SK-N-SH (cell line): ENCODE measurements at regions of chr12 and their contacts with region 1.

Region 1: DNA sequence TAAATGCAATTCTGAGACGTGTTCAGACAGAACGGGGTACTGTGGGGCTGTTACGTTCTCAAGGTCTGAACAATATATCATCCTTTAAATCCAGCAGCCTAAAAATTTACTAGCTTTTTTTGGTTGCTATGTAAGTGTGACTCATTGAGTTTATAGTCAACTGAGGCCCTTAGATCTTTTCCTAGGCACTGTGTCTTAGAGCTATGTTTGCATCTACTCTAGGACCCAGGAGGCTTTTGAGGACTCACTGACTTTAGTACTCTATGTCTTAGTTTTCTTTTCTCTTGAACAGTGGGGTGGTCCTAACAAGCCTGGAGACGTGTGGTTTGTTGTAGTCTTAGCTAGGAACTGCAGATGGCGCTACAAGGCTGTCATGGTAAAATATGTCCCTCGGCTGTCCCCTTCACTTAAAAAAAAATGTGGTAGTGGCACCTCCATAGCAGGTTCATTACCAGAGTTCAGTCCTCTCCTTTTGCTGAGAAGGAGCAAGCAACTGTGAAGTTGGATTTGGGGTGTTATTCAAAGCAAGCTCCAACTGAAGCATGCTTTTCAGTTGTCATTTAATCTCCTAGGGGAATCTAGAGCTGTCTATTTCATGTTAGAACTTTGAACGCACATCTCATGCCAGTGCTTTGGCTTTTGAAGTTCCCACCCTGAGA is 8.7 kb upstream of the SPATS2 start:
- DNase-seq: peak; percentile 74
- H3K4me3 ChIP-seq: peak overlapping the region in 1 of 2 experiments; percentile 43; a peak in 1 of 4 replicates
- H3K27ac ChIP-seq: peak overlapping the region in 1 of 2 experiments; percentile 44; a peak in 2 of 4 replicates
- H3K4me1 ChIP-seq: no peaks in the 10 kb centered on the region
- H3K27me3 ChIP-seq: no peaks in the 10 kb centered on the region
- CTCF ChIP-seq: peak; percentile 92
- EP300 ChIP-seq: no peak
- RAD21 ChIP-seq: peak; percentile 97

Region 2: DNA sequence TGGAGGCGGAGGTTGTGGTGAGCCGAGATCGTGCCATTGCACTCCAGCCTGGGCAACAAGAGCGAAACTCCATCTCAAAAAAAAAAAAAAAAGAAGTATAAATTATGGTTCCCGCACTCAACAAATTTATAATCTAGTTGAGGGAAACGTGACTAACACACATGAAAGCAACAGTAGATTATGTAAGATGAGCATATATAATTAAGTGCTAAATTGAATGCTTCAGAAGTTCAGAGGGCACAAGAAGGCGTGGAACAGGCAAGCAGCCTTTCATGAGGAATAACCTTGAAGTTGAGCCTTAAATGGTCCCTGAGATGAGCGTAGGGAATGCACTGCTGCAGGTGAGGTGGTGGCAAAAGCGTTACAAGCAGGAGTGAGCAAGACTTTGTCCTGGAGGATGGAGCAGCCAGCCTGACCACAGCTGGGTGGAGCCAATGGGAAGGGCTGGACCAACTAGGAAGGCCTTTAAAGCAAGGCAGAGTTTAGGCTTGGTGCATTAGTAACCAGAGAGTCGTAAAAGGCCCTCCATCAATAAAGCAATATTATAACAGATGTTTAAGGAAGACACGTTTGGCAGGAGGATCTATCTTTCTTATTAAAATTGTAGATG is 139.1 kb before region 1 on chr12:
- CTCF ChIA-PET with region 1: no interaction called
- POLR2A ChIA-PET with region 1: no interaction called
- DNase-seq: no peak
- H3K4me3 ChIP-seq: no peak overlapping the region
- H3K27ac ChIP-seq: no peak overlapping the region
- H3K4me1 ChIP-seq: peaks cover 13 to 16% of the 10 kb centered on the region in 2 experiments; a peak in 3 of 4 replicates
- H3K27me3 ChIP-seq: no peaks in the 10 kb centered on the region
- CTCF ChIP-seq: no peak
- EP300 ChIP-seq: no peak
- RAD21 ChIP-seq: no peak

Region 3: GRCh38 chr12:49331380-49332222 is 27.0 kb before region 1 on chr12:
- CTCF ChIA-PET with region 1: interaction called, 40 read pairs
- POLR2A ChIA-PET with region 1: interaction called, 3 read pairs
- DNase-seq: peak; percentile 81
- H3K4me3 ChIP-seq: peak overlapping the region in 1 of 2 experiments; percentile 25; a peak in 1 of 4 replicates
- H3K27ac ChIP-seq: no peak overlapping the region
- H3K4me1 ChIP-seq: peaks cover 0 to 2% of the 10 kb centered on the region in 2 experiments; a peak in 1 of 4 replicates
- H3K27me3 ChIP-seq: no peaks in the 10 kb centered on the region
- CTCF ChIP-seq: peak; percentile 84
- EP300 ChIP-seq: no peak
- RAD21 ChIP-seq: peak; percentile 80

Region 4: DNA sequence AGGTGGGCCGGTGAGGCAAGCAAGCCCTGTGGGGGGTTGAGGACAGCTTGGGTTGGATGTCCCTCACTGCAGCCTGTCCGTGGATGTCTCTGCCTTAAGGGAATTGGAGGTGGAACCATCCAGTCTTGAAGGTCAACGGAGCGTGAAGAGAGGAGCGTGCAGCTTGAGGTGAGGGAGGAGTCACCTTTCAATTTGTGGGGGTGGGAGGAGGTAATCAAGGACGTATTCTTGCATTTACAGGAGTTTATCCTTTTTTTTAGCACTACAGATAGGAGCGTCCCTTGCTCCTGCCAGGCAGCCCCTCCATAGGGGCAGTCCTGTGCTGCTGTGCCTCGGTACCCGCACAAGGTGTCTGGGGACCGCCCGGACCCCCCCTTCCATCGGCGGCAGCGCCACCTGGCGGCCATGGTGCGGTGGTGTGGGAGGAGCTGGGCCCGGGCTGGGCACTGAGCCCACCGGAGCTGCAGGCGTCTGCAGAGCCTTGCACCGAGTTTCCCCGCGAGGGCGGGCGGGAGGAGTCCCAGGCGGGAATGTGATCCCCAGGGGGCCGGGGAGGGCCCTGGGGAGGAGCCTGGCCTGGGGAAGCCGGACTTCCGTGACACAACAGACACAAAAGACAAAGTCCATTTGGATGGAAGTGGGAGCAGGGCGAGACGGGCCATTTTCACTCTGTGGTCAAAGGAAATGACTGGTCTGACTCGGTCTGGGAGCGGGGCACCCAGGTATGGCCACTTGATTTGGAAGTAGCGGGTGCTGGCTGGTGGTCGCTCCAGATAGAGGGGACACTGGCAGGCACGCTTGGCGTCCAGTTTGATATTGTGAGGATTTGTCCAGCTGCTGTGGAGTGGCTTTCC is 11.0 kb before region 1 on chr12:
- CTCF ChIA-PET with region 1: interaction called, 133 read pairs
- POLR2A ChIA-PET with region 1: no interaction called
- DNase-seq: peak; percentile 97
- H3K4me3 ChIP-seq: peak overlapping the region; percentile 19 to 50
- H3K27ac ChIP-seq: no peak overlapping the region
- H3K4me1 ChIP-seq: peaks cover 15 to 38% of the 10 kb centered on the region in 2 experiments; a peak in 2 of 4 replicates
- H3K27me3 ChIP-seq: peaks cover 5% of the 10 kb centered on the region; the same call in 1 of the 2 replicates
- CTCF ChIP-seq: peak; percentile 95
- EP300 ChIP-seq: no peak
- RAD21 ChIP-seq: peak; percentile 34

Region 5: DNA sequence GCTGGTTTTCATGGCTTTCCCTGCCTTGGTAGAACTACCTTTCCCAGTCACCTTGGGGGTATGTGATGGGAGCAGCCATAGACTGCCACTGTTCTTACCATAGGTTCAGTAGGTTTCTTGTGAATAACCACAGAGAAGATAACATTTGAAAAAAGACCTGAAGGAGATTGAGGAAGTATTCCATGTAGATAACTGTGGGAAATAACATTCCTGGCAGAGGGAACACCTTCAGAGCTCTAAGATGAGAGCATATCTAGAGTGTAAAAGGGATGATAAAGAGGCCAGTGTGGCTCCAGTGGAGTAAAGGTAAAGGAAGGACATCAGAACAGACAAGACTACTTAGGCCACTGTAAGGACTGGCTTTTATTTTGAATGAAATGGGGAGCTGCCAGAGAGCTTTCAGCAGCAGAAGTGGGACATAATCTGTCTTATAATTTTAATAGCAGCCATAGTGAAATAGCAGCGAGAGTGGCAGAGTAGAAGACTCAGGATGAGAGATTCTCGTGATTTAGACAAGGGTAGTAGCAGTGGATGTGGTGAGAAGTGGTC is 97.6 kb after region 1 on chr12:
- CTCF ChIA-PET with region 1: interaction called, 10 read pairs
- POLR2A ChIA-PET with region 1: no interaction called
- DNase-seq: no peak
- H3K4me3 ChIP-seq: no peak overlapping the region
- H3K27ac ChIP-seq: no peak overlapping the region
- H3K4me1 ChIP-seq: no peaks in the 10 kb centered on the region
- H3K27me3 ChIP-seq: no peaks in the 10 kb centered on the region
- CTCF ChIP-seq: no peak
- EP300 ChIP-seq: no peak
- RAD21 ChIP-seq: no peak

Region 6: GRCh38 chr12:49496417-49497360 is 138.1 kb after region 1 on chr12:
- CTCF ChIA-PET with region 1: interaction called, 44 read pairs
- POLR2A ChIA-PET with region 1: no interaction called
- DNase-seq: no peak
- H3K4me3 ChIP-seq: no peak overlapping the region
- H3K27ac ChIP-seq: no peak overlapping the region
- H3K4me1 ChIP-seq: peaks cover 0 to 12% of the 10 kb centered on the region in 2 experiments; a peak in 2 of 4 replicates
- H3K27me3 ChIP-seq: no peaks in the 10 kb centered on the region
- CTCF ChIP-seq: no peak
- EP300 ChIP-seq: no peak
- RAD21 ChIP-seq: no peak

Region 7: DNA sequence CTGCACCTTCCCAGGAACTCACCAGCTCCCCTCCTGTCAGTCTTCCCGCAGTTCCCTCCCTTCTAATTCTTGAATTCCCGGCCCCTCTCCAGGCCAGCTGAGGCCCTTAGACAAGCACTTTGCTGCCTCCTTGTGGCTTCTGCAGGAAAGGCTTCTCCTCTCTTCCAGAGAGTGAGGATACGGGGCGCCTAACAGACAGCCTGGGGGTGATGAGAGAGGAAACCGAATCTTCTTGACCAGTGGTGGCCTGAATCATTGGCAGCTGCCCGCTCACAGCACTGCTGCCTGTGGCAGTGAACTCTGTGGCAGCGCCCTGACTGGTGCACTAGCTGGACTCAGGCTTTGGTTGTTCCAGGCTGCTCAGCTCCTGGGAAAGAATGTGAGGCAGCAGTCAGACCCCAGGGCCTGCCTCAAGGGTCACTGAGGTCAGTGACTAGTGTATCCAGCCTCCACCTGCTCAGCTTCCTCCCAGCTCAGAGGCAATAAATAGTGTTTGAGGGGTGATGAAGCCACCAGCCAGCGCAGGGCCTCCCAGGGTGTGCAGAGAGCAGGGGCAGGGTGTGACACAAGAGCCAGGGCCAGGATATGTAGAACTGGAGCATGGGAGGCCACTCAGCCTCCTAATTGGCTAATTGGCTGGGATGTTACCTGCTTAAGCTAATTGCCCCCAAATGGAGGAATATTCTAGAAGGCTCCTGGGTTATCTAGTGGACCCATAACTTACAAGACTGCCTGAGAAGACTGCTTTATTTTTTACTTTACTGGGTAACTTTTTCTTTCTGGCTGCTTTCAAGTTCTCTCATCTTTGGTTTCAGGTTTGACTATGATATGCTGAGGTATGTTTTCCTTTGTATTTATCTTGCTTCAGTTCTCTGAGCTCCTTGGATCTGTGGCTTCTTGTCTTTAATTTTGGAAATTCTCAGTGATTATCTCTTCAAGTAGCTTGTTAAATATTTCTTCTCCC is 222.2 kb after region 1 on chr12:
- CTCF ChIA-PET with region 1: interaction called, 73 read pairs
- POLR2A ChIA-PET with region 1: interaction called, 3 read pairs
- DNase-seq: peak; percentile 83
- H3K4me3 ChIP-seq: no peak overlapping the region; a peak in 1 of 4 replicates
- H3K27ac ChIP-seq: no peak overlapping the region; a peak in 1 of 4 replicates
- H3K4me1 ChIP-seq: peaks cover 0 to 18% of the 10 kb centered on the region in 2 experiments; a peak in 1 of 4 replicates
- H3K27me3 ChIP-seq: no peaks in the 10 kb centered on the region
- CTCF ChIP-seq: peak; percentile 88
- EP300 ChIP-seq: no peak; a peak in 1 of 4 replicates
- RAD21 ChIP-seq: peak; percentile 82